ENCODE measurements at regions of chrX and their contacts with region 1.

Region 1: GRCh38 chrX:24838629-24839028 is 144.9 kb downstream of the POLA1 start:
- DNase-seq: peak; percentile 7
- H3K4me3 ChIP-seq: no peak overlapping the region
- H3K27ac ChIP-seq: no peak overlapping the region
- H3K4me1 ChIP-seq: no peaks in the 10 kb centered on the region; a peak in 1 of 4 replicates
- H3K27me3 ChIP-seq: no peaks in the 10 kb centered on the region
- CTCF ChIP-seq: peak; percentile 78
- EP300 ChIP-seq: no peak
- RAD21 ChIP-seq: peak; percentile 65

Region 2: DNA sequence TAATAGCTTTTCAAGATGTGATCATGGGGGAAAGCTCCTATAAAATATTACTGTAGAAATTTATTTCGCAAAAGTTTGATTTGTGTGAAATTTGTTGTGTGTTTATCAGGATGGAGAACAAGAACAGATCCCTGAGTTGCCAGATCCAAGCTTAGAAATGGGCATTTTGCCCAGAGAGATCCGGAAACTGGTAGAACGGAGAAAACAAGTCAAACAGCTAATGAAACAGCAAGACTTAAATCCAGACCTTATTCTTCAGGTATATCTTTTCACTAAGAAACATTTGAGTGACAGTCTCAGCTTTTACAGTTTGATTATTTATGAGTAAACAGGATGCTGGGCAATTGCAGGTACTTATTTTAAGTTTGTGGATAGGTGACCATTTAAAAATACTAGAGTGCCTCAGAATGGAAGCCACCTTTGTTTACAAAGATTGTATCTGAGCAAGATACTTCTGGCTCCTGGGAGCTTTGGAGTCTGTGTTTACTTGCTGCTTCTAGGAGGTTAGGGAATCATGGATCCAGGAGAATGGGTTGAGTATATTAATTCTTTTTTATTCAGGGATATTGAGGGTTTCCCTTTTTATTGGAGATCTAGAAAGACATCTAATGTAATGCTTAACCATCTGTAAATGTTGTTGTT is 90.3 kb before region 1 on chrX:
- CTCF ChIA-PET with region 1: interaction called, 11 read pairs
- POLR2A ChIA-PET with region 1: no interaction called
- DNase-seq: no peak
- H3K4me3 ChIP-seq: no peak overlapping the region
- H3K27ac ChIP-seq: no peak overlapping the region
- H3K4me1 ChIP-seq: no peaks in the 10 kb centered on the region
- H3K27me3 ChIP-seq: no peaks in the 10 kb centered on the region; the same call in 1 of the 2 replicates
- CTCF ChIP-seq: no peak
- EP300 ChIP-seq: no peak
- RAD21 ChIP-seq: no peak

Region 3: DNA sequence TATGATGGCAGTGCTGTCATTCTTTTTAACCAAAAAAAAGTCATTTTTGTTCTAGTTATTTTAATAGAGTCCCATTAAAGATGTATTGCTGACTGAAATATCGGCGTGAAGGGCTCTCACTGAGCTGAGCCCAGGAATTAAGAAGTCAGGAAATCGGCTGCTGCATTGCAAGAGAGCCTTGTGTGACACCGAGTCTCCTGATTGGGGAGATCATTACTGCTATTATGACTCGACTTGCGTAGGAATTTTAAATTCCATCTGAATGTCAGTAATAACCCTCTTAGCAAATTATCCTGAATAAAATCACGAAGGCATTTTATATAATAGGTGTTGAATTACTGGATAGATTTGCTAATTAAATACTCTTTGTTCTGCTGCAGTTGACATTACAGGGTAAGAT is 33.4 kb before region 1 on chrX:
- CTCF ChIA-PET with region 1: interaction called, 17 read pairs
- POLR2A ChIA-PET with region 1: no interaction called
- DNase-seq: no peak
- H3K4me3 ChIP-seq: no peak overlapping the region
- H3K27ac ChIP-seq: no peak overlapping the region
- H3K4me1 ChIP-seq: no peaks in the 10 kb centered on the region; a peak in 1 of 4 replicates
- H3K27me3 ChIP-seq: no peaks in the 10 kb centered on the region
- CTCF ChIP-seq: no peak
- EP300 ChIP-seq: no peak
- RAD21 ChIP-seq: no peak

Region 4: GRCh38 chrX:24828147-24828546 is 10.5 kb before region 1 on chrX:
- CTCF ChIA-PET with region 1: interaction called, 16 read pairs
- POLR2A ChIA-PET with region 1: no interaction called
- DNase-seq: no peak
- H3K4me3 ChIP-seq: no peak overlapping the region
- H3K27ac ChIP-seq: no peak overlapping the region
- H3K4me1 ChIP-seq: no peaks in the 10 kb centered on the region
- H3K27me3 ChIP-seq: no peaks in the 10 kb centered on the region; the same call in 1 of the 2 replicates
- CTCF ChIP-seq: no peak
- EP300 ChIP-seq: no peak
- RAD21 ChIP-seq: no peak

Region 5: DNA sequence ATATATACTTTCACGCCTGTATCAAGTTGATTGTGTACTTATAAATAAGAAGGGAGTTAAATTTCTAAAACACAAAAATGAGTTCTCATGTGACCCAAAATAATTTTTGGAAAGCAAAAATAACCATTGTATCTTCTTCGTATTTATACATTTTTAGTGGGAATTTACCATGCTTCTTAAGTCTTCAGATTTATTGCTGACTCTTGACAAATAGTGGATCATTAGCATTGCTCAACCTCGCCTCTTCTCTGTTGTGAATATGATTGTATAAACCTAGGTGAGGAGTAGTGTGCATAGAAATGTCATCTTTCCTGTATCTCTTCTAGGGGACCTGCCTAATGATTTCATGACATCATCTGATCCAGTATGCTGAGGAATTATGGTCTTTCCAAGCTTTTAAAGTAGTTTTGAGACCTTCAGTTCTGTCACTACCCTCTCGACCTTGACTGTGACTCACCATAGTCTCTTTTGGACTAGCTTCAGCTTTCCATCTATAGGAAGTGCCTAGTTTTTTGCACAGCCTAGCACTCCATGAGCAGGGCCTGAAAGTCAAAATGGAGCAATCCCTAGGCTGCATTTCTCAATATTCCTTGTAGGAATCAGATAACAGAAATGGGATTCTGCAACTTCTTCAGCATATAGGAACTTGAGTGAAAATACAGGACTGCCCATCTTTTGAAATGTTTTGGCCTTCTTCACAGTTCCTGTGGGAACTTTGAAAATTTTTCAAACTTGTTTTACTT is 19.5 kb after region 1 on chrX:
- CTCF ChIA-PET with region 1: interaction called, 19 read pairs
- POLR2A ChIA-PET with region 1: no interaction called
- DNase-seq: no peak
- H3K4me3 ChIP-seq: no peak overlapping the region
- H3K27ac ChIP-seq: no peak overlapping the region
- H3K4me1 ChIP-seq: no peaks in the 10 kb centered on the region
- H3K27me3 ChIP-seq: no peaks in the 10 kb centered on the region
- CTCF ChIP-seq: no peak
- EP300 ChIP-seq: no peak
- RAD21 ChIP-seq: no peak

Region 6: DNA sequence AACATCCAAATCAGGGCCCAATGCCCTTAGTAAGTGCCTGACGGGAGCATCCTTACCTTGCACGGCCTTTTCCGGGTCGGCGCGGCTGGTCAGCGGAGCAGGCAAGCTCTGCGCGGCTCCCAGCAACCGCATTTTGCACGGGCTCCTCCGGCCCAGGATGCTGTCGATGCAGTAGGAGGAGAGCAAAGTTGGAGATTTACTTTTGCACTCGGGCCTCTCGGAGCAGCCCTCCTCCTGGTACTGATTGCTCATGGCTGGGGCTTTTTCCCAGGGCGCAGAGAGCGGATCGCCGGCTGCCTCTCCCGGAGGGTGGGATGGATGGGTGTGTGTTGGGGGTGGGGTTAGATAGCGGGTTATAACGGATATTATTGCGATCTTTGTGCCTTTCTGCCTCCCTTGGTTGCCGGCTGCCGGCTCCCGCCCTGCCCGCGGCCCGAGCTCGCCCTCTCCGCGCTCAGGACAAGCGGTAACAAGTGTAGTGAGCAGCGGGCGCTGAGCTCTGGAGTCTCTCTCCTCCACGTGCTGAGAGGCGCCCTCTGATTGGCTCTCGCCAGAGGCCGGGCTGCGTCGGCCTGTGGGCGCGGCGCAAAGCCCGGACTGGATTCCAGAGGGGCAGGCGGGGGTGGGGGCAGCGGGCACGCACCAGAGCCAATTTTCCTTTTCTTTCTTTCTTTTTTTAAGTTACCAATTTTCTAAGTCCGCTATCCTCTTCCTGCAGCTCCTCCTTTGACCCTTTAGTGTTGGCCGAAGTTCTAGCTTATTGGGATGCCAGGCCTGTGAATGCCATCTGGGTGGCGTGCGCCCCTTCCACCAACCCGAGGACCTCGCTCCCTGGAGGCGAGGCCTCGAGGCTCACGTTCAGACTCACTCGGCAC is 177.1 kb after region 1 on chrX and contains the start of gene ARX:
- CTCF ChIA-PET with region 1: interaction called, 32 read pairs
- POLR2A ChIA-PET with region 1: no interaction called
- DNase-seq: peak; percentile 90
- H3K4me3 ChIP-seq: no peak within 1 kb of the TSS; a peak in 1 of 4 replicates
- H3K27ac ChIP-seq: no peak within 1 kb of the TSS
- H3K4me1 ChIP-seq: peaks cover 0 to 9% of the 10 kb centered on the region in 2 experiments; a peak in 1 of 4 replicates
- H3K27me3 ChIP-seq: peaks cover 81% of the 10 kb centered on the region
- CTCF ChIP-seq: no peak
- EP300 ChIP-seq: no peak
- RAD21 ChIP-seq: no peak
- polyA plus RNA-seq, gene ARX: not detected in 2 replicates

Region 7: DNA sequence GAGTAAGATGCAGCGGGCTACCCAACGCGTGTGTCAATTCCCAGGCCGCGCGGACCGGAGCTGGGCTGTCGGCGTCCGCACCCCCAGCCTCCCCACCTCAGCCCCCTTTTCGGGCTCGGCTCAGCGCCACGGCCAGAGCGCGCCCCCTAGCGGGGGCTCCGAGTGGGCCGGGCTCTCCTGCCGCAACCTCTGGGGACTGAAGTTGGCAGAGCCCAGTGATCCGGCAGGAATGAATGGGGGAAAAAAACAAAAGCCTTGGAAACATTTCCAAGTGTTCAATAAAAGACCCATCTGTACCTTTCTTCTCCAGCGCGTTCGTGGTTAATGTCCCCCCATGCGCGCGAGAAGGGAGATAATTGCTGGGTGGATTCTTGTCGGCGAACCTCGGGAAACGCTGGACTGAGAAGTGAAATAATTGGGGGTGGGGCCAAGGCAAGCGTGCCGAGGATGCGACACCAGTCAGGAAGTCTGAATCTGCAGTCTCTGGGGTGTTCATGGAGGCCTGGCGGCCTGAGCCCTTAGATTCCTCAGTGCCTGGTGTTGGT is 182.3 kb after region 1 on chrX:
- CTCF ChIA-PET with region 1: interaction called, 32 read pairs
- POLR2A ChIA-PET with region 1: no interaction called
- DNase-seq: peak; percentile 88
- H3K4me3 ChIP-seq: peak overlapping the region; percentile 28 to 39
- H3K27ac ChIP-seq: no peak overlapping the region
- H3K4me1 ChIP-seq: peaks cover 0 to 9% of the 10 kb centered on the region in 2 experiments; a peak in 1 of 4 replicates
- H3K27me3 ChIP-seq: peaks cover 77% of the 10 kb centered on the region
- CTCF ChIP-seq: peak; percentile 69
- EP300 ChIP-seq: no peak
- RAD21 ChIP-seq: peak; percentile 62